Ovary (tissue), 10 donors: ENCODE measurements at regions of chr3 and their contacts with region 1.

Region 1: GRCh38 chr3:184513276-184514170 is 48.1 kb upstream of the EPHB3 start:
- DNase-seq: peak; percentile 84 to 93 (median 90)
- H3K4me3 ChIP-seq: peak overlapping the region; percentile 39
- H3K27ac ChIP-seq: no peak overlapping the region
- H3K4me1 ChIP-seq: peaks cover 2% of the 10 kb centered on the region
- H3K27me3 ChIP-seq: no peaks in the 10 kb centered on the region
- CTCF ChIP-seq: peak; percentile 73 to 88 (median 80)
- EP300 ChIP-seq: no peak
- POLR2A ChIP-seq: no peak

Region 2: GRCh38 chr3:184298759-184299496 is 214.6 kb before region 1 on chr3 and contains the start of gene PSMD2:
- intact Hi-C with region 1: loop called in 1 of 4 experiments (anchors 10 kb)
- DNase-seq: peak; percentile 98 to 99 (median 99)
- H3K4me3 ChIP-seq: peak within 1 kb of the TSS; percentile 79
- H3K27ac ChIP-seq: peak within 1 kb of the TSS; percentile 24 to 58
- H3K4me1 ChIP-seq: peaks cover 4% of the 10 kb centered on the region
- H3K27me3 ChIP-seq: no peaks in the 10 kb centered on the region
- CTCF ChIP-seq: peak in 1 of 3 donors; percentile 15
- EP300 ChIP-seq: peak; percentile 14
- POLR2A ChIP-seq: peak; percentile 75
- total RNA-seq, gene PSMD2: 74.4 to 149 (median 138) TPM

Region 3: GRCh38 chr3:184380191-184380626 is 133.3 kb before region 1 on chr3:
- intact Hi-C with region 1: loop called in 2 of 4 experiments (anchors 5 kb)
- DNase-seq: peak; percentile 81 to 87 (median 86)
- H3K4me3 ChIP-seq: peak overlapping the region; percentile 67
- H3K27ac ChIP-seq: peak overlapping the region in 1 of 2 donors; percentile 23
- H3K4me1 ChIP-seq: peaks cover 2% of the 10 kb centered on the region
- H3K27me3 ChIP-seq: no peaks in the 10 kb centered on the region
- CTCF ChIP-seq: no peak
- EP300 ChIP-seq: no peak
- POLR2A ChIP-seq: no peak

Region 4: DNA sequence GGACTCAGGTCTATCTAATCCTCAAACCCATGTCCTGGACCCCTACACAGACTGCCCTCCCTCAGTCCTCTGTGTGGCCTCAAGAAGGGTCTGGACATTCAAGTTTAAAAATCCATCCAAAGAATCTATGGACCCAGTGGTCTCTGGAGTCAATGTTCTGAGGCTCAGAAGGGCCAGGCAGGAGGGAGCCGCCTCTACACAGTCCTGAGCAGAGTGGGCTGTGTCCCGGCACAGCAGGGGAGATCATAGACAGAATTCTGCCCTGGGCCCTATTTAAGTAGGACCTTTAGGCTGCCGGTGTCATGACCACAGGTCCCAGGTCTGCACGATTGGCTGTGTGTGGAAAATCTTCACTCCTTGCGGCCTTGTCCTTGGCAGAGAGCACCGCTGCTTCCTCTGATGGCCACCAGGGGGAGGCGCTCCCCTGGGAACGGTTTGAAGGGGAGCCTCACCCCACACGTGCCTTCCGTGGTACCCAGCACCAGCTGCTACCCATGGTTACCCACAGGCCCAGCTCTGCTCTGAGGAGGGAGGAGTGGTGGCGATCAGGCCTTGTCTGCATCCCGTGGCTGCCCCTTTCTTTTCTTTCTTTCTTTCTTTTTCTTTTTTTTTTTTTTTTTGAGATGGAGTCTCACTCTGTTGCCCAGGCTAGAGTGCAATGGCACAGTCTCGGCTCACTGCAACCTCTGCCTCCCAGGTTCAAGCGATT is 95.8 kb before region 1 on chr3:
- intact Hi-C with region 1: loop called in 2 of 4 experiments (anchors 5 to 10 kb)
- DNase-seq: peak; percentile 73 to 87 (median 81)
- H3K4me3 ChIP-seq: no peak overlapping the region
- H3K27ac ChIP-seq: no peak overlapping the region
- H3K4me1 ChIP-seq: peaks cover 3% of the 10 kb centered on the region
- H3K27me3 ChIP-seq: no peaks in the 10 kb centered on the region
- CTCF ChIP-seq: peak; percentile 72 to 87 (median 82)
- EP300 ChIP-seq: no peak
- POLR2A ChIP-seq: no peak

Region 5: DNA sequence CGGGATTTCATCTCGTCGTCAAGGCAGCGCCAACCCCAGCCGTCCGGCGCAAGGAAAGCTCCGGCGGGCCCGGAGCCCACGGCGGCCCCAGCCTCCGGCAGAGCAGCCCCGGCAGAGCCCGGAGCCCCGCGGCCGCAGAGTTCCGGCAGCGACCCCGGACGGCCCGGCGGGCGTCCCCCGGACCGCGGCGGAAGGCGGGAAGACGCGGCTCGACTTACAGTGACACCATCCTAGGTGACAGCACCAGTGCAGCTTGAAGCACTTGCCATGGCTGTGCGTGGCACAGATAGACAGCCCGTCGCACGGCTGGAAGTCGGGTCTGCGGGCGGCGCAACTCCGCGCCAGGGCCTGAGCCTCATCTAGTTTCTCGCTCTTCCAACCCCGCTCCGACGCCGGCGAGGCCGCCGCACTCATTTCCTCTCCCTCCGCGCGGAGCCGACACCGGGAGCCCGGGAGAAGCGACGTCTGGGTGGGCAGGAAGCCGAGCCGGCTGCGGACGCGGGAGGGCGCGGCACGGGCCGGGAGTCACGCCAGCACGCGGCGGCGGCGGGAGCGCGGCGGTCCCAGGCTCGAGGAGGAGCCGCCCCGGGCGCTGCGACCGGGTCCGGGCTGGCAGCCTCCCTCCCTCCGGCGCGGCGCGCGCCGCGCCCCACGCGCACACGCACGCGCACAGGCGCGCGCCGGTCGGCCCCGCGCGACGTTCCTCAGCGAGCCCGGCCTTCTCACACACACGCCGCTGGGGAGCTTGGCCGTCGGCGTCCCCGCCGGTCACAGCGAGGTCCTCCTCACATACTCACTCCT is 639.1 kb after region 1 on chr3 and contains the start of gene C3orf70:
- intact Hi-C with region 1: no loop called
- DNase-seq: peak; percentile 65 to 86 (median 78)
- H3K4me3 ChIP-seq: peak within 1 kb of the TSS; percentile 67
- H3K27ac ChIP-seq: peak within 1 kb of the TSS; percentile 65 to 82
- H3K4me1 ChIP-seq: peaks cover 1% of the 10 kb centered on the region
- H3K27me3 ChIP-seq: no peaks in the 10 kb centered on the region
- CTCF ChIP-seq: no peak
- EP300 ChIP-seq: no peak
- POLR2A ChIP-seq: peak; percentile 10
- total RNA-seq, gene C3orf70: 3.8 to 17.7 (median 7.6) TPM